Right ventricle myocardium inferior (tissue), 1 donor: ENCODE measurements at regions of chr12 and their contacts with region 1.

Region 1: DNA sequence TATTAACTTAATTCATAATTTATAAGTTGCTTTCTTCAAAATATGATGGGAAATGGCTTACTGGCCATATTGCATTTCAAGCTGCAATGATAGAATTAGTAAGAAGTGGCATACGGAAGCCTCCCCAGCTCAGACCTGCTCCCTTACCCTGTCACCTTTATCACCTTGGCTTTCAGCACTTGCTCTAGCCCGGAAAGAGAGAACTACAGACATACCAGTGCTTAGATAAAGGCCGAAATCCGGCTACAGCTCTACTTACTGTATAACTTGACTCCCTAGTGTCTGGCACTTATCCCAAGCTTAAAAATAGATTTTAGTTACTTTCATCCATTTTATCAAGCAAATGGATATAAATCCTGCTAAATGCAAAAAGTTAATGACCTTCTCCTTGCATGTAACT is 42.5 kb downstream of the PKP2 start:
- DNase-seq: no peak
- ATAC-seq: peak; percentile 91

Region 2: GRCh38 chr12:32918890-32919801 is 65.0 kb after region 1 on chr12:
- intact Hi-C with region 1: loop called (anchors 1 kb)
- DNase-seq: no peak
- ATAC-seq: peak; percentile 71